ENCODE measurements at regions of chr1 and their contacts with region 1.

Region 1: DNA sequence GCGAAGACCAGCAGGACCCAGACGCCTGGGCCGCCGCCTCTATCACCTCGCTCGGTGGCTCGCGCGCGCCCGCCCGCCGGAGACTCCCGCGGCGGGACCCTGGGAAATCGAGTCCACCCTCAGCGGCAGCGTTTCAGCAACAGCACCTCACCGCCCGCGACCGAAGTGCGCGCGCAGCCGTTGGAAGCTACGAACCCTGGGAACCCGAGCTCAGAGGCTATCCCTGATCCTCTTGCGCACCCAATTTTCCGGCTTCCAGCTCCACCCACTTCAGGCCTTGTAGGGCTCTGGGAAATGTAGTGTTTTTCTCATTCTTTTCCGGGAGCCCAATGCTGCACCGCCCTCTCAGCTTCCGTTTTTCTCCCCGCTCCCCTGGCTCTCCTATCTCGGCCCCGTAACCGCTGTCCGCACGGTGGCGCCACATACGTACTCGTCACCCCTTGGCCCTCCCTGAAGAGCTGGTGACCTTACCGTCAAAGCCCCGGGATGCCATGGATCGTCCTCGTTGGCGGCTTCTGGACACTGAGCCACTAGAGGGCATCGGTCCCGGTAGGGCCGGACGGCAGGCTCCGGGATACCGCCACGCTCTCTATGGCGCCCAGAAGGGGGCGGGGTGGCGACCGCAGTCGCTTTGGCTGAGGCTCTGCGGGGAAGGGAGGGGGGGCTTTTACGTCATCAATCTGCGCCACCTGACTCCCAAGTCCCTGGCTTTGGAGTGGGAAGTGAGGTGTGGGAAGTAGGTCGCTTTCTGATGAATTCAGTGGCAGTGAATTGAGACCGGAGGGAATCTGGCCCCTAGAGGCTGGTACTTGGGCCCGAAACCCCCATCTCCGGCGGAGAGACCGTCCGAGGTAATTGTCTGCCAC is at the starts of genes ODR4 and TPR:
- DNase-seq: peak; percentile 100
- H3K4me3 ChIP-seq: peak within 1 kb of the TSS; percentile 86 to 100 (median 96)
- H3K27ac ChIP-seq: peak within 1 kb of the TSS; percentile 89 to 97
- H3K4me1 ChIP-seq: peaks cover 0 to 29% (median 16%) of the 10 kb centered on the region in 4 experiments
- H3K27me3 ChIP-seq: no peaks in the 10 kb centered on the region

Region 2: DNA sequence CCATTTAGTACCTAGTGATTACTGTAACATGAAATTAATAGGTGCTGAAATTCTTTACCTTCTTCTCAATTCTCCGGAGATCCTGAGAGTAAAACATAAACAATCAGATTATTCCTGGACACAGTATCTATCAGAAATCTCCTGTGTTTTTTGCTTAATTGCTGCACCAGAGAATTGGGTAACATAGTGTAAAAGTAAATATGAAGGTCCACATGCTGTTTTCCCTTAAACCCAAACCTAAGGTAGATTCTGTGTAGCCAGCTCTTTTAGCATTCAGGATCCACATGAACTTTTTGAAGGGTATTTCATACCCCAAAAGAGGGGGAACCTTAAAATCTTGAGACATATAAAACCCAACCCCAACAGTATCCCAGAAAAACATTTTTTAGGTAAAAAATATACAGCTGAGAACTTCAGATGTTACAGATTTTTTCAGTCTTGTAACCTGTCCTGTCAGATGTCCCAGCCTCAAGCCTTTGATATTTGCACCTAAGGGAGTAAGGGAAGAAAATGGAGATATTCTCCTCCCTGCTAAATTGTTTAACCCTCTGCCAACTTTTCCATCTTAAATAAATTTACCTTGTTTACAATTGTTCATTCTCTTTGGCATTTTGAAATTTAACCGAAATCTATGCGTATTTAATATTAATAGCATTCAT is 11.5 kb after region 1 on chr1:
- CTCF ChIA-PET with region 1: interaction called, 20 read pairs
- POLR2A ChIA-PET with region 1: interaction called, 3 read pairs
- DNase-seq: no peak
- H3K4me3 ChIP-seq: no peak overlapping the region
- H3K27ac ChIP-seq: no peak overlapping the region
- H3K4me1 ChIP-seq: no peaks in the 10 kb centered on the region
- H3K27me3 ChIP-seq: no peaks in the 10 kb centered on the region